GM18951 (cell line): ENCODE measurements at regions of chr2 and their contacts with region 1.

Region 1: DNA sequence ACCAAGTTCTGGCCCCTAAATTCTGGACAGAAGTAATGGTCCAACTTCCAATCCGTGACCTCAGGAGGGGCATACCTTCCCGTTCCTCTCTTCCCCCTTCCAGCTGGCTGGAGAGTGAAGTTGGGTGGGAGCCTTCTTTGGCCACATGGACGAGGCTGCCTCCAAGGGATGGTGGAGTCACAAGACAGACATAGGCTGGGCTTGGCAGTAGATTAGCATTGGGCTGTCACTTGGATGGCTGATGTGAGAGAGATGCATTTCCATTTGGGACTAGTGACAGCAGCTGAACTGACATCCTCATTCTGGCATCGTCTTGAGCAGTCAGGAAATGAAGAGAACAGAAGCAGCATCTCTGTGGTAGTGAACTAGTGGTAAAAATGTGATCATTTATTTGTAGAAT is 12.6 kb downstream of the NT5DC4 start:
- POLR2A ChIP-seq: no peak

Region 2: GRCh38 chr2:112229348-112229747 is 504.1 kb before region 1 on chr2:
- in situ Hi-C with region 1: no loop called
- POLR2A ChIP-seq: no peak

Region 3: GRCh38 chr2:112601751-112602150 is 131.7 kb before region 1 on chr2:
- in situ Hi-C with region 1: loop called (anchors 5 kb)
- POLR2A ChIP-seq: no peak

Region 4: GRCh38 chr2:112614201-112614840 is 119.1 kb before region 1 on chr2:
- in situ Hi-C with region 1: no loop called
- POLR2A ChIP-seq: no peak

Region 5: GRCh38 chr2:113068718-113069435 is 335.4 kb after region 1 on chr2:
- in situ Hi-C with region 1: no loop called
- POLR2A ChIP-seq: no peak